Transverse colon (tissue), 4 donors: ENCODE measurements at regions of chr14 and their contacts with region 1.

Region 1: DNA sequence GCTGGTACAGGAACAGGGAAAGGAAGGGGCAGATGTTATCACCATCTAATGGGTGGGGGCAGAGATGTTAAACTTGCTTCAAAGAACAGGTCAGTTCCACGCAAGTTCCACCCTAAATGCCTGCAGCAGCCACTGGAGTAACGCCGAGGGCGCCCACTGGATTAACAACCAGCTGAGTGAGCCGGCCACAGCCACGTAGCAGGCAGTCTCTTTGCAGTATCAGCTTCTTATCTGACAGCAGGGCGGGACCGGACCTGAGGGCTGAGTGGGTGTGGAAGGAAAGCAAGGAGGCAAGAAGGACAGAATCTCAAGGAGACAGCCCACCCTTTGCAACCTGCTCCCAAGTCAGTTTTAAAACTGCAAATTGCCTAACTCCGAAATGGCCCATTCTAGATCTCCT is 38.4 kb upstream of the FOXN3 start:
- DNase-seq: peak; percentile 50
- H3K4me3 ChIP-seq: no peak overlapping the region
- H3K27ac ChIP-seq: no peak overlapping the region
- H3K4me1 ChIP-seq: peaks cover 0 to 6% (median 2%) of the 10 kb centered on the region in 4 donors
- H3K27me3 ChIP-seq: no peaks in the 10 kb centered on the region
- CTCF ChIP-seq: no peak
- EP300 ChIP-seq: no peak
- POLR2A ChIP-seq: no peak

Region 2: GRCh38 chr14:88079624-88080023 is 1375.8 kb before region 1 on chr14:
- in situ Hi-C with region 1: no loop called
- intact Hi-C with region 1: loop called (anchors 5 kb)
- DNase-seq: no peak
- H3K4me3 ChIP-seq: no peak overlapping the region
- H3K27ac ChIP-seq: no peak overlapping the region
- H3K4me1 ChIP-seq: peaks cover 0 to 11% (median 0%) of the 10 kb centered on the region in 4 donors
- H3K27me3 ChIP-seq: no peaks in the 10 kb centered on the region
- CTCF ChIP-seq: no peak
- EP300 ChIP-seq: no peak
- POLR2A ChIP-seq: no peak

Region 3: GRCh38 chr14:89578156-89578555 is 122.7 kb after region 1 on chr14:
- in situ Hi-C with region 1: no loop called
- intact Hi-C with region 1: no loop called
- DNase-seq: no peak
- H3K4me3 ChIP-seq: no peak overlapping the region
- H3K27ac ChIP-seq: peak overlapping the region in 1 of 4 donors; percentile 12
- H3K4me1 ChIP-seq: peaks cover 0 to 24% (median 7%) of the 10 kb centered on the region in 4 donors
- H3K27me3 ChIP-seq: no peaks in the 10 kb centered on the region
- CTCF ChIP-seq: no peak
- EP300 ChIP-seq: no peak
- POLR2A ChIP-seq: no peak